Activated T-helper 2 cell treated with anti-CD3 and anti-CD28 coated beads, Interferon-gamma antibody, Interleukin-2, Interleukin-4, amounts not matched to agents 10 μg/mL and 5 μg/mL and 100 μg/mL, durations not matched to agents 14 hours and 24 hours and 36 hours (primary cell): ENCODE measurements at regions of chr2 and their contacts with region 1.

Region 1: DNA sequence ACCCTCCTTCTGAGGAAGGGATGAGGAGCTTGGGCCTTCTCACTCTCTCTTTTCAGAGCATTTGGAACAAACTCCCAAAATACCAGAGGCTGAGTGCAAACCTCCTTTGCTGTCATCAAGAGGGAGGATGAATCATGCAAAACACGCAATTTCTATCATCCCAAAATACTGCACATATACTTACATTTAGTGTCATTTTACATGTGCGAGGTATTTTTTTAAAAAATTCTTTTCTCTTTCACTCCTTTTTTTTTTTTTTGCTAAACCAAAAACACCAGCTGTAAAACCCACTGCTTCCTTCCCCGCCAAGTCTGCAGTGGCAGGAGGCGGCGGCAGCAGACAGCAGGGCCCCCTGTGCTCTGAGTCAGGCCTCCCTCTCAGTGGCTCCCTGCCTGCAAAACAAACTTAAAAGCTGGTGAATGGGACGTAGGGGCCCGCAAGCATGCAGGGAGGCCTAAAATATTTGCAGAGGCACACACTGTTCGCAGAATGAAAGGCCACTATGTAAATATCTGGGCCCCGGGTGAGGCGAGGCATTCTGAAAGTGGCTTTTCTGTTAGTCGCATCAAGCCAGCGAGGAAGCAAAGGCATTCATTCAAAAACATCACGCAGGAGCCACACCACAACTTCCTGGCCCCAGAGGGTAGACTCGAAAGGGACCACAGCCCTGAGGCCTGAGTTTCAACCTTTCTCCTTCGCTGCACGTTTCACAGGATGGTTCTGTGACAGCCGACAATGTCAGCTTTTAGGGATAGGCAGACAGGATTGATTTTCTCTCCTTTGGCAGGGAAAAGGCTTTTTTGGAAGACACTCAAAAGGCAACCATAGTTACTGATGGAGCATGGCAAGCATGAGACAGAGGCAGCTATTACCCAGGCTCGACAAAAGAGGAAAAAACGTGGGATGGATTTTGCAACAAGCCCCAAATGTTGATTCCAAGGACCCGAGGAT is 73.4 kb downstream of the ACTR2 start:
- DNase-seq: peak; percentile 69
- H3K4me3 Mint-ChIP-seq: peak overlapping the region; percentile 55
- H3K27ac Mint-ChIP-seq: peak overlapping the region; percentile 86
- H3K4me1 Mint-ChIP-seq: peaks cover 53% of the 10 kb centered on the region
- H3K27me3 Mint-ChIP-seq: peaks cover 13% of the 10 kb centered on the region

Region 2: DNA sequence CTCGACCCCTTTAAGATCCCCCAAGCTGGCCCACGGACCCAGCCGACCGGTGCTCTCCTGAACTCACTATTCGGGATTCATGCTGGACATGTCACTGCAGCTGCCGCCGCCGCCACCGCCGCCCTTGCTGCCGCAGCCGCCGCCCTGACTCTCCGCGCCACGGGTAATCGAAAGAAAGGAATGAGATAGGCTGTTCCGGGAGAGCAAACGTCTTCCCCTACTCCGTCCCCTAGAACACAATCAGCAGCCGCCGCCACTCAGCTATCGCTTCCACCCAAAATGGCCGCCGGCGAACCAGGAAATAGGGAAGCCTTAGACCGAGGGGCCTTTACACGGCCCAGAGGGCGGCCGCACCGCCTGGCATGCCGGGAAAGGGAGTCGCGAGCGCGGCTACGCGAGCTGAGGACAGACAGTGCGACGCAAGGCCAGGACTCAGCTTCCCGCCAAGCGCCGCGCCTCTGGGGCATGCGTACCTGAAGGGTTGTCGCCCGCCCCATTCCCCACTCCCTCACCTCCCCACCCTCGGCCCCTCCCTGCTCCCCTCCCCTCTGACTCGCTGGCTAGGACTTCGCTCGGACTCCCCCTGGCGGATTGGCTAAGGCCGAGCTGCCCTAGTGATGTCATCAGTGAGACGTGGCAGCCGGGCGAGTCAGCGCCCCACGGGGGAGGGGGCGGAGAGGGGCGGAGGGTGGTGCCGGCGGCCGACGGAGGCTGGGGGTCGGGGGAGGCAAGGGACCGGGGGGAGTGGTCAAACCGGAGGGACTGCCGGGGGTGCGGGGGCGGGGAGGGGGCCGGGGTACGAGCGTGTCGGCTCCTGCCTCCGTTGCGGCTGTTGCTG is 171.0 kb before region 1 on chr2 and contains the start of gene RAB1A:
- intact Hi-C with region 1: loop called (anchors 1 kb)
- DNase-seq: peak; percentile 98
- H3K4me3 Mint-ChIP-seq: peak within 1 kb of the TSS; percentile 100
- H3K27ac Mint-ChIP-seq: peak within 1 kb of the TSS; percentile 100
- H3K4me1 Mint-ChIP-seq: peaks cover 35% of the 10 kb centered on the region
- H3K27me3 Mint-ChIP-seq: peaks cover 6% of the 10 kb centered on the region
- total RNA-seq, gene RAB1A: 88.1 and 96.6 TPM in 2 replicates

Region 3: DNA sequence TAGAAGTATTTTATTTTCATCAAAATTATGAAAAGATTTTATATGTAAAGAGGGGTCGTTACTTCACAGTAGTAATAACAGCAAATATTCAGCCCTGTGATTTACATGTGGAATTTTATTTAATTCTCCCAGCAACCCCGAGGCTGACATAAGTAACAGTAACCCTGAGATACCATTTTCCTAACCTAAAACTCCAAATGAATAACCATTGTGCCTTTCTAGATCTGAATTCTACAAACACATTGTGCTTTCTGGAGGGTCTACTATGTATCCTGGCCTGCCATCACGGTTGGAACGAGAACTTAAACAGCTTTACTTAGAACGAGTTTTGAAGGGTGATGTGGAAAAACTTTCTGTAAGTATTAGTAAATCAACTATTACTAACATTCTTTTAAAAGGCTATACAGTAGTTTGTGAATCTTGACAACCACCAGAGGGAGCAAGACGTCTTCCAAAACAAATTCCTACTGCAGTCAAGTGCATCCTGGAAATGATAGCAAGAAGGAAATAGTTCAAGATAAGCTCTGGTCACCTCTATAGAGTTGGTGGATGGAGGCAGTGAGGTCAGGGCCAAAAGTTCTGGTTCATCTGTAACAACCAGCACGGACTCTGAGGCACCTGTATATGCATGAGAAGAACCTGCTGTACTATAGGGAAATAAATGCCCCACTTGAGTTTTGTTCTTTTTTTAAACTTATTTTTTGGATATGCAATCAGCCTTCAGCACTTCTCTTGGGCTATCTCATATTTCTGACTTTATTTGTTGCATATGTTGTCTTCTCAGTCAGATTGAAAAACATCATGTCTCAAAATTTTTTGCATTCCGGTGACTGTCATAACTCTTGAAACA is 36.0 kb before region 1 on chr2:
- intact Hi-C with region 1: loop called (anchors 2 kb)
- DNase-seq: no peak
- H3K4me3 Mint-ChIP-seq: no peak overlapping the region
- H3K27ac Mint-ChIP-seq: no peak overlapping the region
- H3K4me1 Mint-ChIP-seq: peaks cover 13% of the 10 kb centered on the region
- H3K27me3 Mint-ChIP-seq: no peaks in the 10 kb centered on the region

Region 4: GRCh38 chr2:65278531-65278981 is 22.5 kb before region 1 on chr2:
- intact Hi-C with region 1: no loop called
- DNase-seq: no peak
- H3K4me3 Mint-ChIP-seq: no peak overlapping the region
- H3K27ac Mint-ChIP-seq: no peak overlapping the region
- H3K4me1 Mint-ChIP-seq: peaks cover 11% of the 10 kb centered on the region
- H3K27me3 Mint-ChIP-seq: peaks cover 8% of the 10 kb centered on the region

Region 5: DNA sequence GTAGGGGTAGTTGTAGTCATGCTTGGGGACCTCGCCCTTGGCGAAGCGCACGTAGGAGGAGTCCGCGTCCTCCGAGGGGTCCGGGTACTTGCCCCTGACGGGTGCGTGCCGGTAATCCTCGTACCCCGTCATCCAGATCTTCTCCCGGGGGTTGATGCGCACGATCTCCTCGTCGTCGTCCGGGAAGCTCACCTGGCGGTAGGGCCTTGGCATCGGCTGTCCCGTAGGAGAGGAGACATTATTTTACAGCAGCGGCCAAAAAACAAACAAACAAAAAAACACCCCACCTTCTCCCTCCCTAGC is 12.9 kb after region 1 on chr2:
- intact Hi-C with region 1: no loop called
- DNase-seq: no peak
- H3K4me3 Mint-ChIP-seq: no peak overlapping the region
- H3K27ac Mint-ChIP-seq: no peak overlapping the region
- H3K4me1 Mint-ChIP-seq: peaks cover 8% of the 10 kb centered on the region
- H3K27me3 Mint-ChIP-seq: no peaks in the 10 kb centered on the region

Region 6: GRCh38 chr2:65357095-65357958 is 56.3 kb after region 1 on chr2:
- intact Hi-C with region 1: loop called (anchors 1 kb)
- DNase-seq: no peak
- H3K4me3 Mint-ChIP-seq: no peak overlapping the region
- H3K27ac Mint-ChIP-seq: no peak overlapping the region
- H3K4me1 Mint-ChIP-seq: peaks cover 59% of the 10 kb centered on the region
- H3K27me3 Mint-ChIP-seq: peaks cover 16% of the 10 kb centered on the region

Region 7: DNA sequence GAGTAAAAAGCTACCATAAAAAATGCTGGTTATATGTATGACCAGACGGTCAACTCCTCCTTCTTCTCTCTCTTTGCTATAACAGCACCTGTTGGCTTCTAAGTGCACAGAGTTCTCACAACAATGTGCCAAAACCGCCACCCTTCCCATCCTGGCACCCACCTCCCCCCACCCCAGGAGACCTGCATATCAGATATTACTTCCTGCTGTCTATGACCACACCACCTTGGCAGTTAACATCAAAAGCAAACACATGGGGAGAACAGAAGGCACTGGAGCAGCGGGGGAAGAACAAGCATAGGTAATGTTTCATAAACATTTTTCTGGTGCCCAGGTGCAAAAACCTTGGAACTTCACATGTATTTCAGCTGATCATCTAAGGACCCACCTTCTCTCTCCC is 115.9 kb after region 1 on chr2:
- intact Hi-C with region 1: loop called (anchors 1 kb)
- DNase-seq: no peak
- H3K4me3 Mint-ChIP-seq: no peak overlapping the region
- H3K27ac Mint-ChIP-seq: peak overlapping the region; percentile 52
- H3K4me1 Mint-ChIP-seq: peaks cover 35% of the 10 kb centered on the region
- H3K27me3 Mint-ChIP-seq: peaks cover 16% of the 10 kb centered on the region

Region 8: DNA sequence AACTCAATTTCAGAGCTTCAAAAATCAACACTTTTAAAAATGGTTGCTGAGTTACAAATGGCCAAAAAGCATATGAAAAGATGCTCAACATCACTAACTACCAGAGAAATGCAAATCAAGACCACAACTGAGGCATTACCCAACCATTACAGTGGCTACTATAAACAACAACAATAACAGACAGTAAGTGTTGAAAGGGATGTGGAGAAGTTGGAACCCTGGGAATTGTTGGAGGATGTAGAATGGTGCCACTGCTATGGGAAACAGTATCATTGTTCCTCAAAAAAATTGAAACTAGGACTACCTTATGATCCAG is 304.7 kb after region 1 on chr2:
- intact Hi-C with region 1: loop called (anchors 1 kb)
- DNase-seq: no peak
- H3K4me3 Mint-ChIP-seq: no peak overlapping the region
- H3K27ac Mint-ChIP-seq: peak overlapping the region; percentile 47
- H3K4me1 Mint-ChIP-seq: peaks cover 15% of the 10 kb centered on the region
- H3K27me3 Mint-ChIP-seq: peaks cover 8% of the 10 kb centered on the region